ENCODE measurements at regions of chr21 and their contacts with region 1.

Region 1: GRCh38 chr21:34986561-34987500 is 62.3 kb downstream of the RUNX1 start:
- DNase-seq: no peak
- ATAC-seq: peak; percentile 5; the same call in 1 of the 3 replicates
- H3K4me3 ChIP-seq: no peak overlapping the region
- H3K27ac ChIP-seq: no peak overlapping the region
- H3K4me1 ChIP-seq: peaks cover 19 to 56% of the 10 kb centered on the region in 2 experiments
- H3K27me3 ChIP-seq: no peaks in the 10 kb centered on the region
- CTCF ChIP-seq: no peak
- EP300 ChIP-seq: no peak
- POLR2A ChIP-seq: no peak
- RAD21 ChIP-seq: no peak

Region 2: GRCh38 chr21:34974162-34974981 is 12.5 kb before region 1 on chr21:
- CTCF ChIA-PET with region 1: no interaction called
- POLR2A ChIA-PET with region 1: interaction called, 12 read pairs
- in situ Hi-C with region 1: no loop called
- intact Hi-C with region 1: no loop called
- DNase-seq: no peak
- ATAC-seq: peak; percentile 61
- H3K4me3 ChIP-seq: no peak overlapping the region
- H3K27ac ChIP-seq: no peak overlapping the region
- H3K4me1 ChIP-seq: peaks cover 2 to 24% of the 10 kb centered on the region in 2 experiments; a peak in 4 of 5 replicates
- H3K27me3 ChIP-seq: no peaks in the 10 kb centered on the region
- CTCF ChIP-seq: no peak
- EP300 ChIP-seq: no peak
- POLR2A ChIP-seq: no peak
- RAD21 ChIP-seq: no peak

Region 3: DNA sequence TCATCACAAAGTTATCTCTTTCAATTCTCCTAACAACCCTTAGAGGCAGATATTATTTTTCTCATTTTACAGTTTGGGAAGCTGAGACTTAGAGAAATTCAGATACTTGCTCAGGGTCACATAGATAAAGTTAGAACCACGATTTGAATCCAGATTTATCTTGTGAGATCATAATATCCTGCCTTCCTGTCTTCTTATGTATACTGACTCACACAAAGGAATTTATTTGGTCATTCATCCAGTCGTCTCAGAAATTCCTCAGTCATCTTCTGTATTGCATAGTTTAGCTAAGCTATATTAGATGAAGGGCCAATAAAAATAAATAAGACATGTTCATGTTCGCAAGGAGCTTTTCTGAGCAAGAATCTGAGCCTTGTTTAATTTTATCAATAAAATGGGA is 98.0 kb after region 1 on chr21:
- CTCF ChIA-PET with region 1: no interaction called
- POLR2A ChIA-PET with region 1: no interaction called
- in situ Hi-C with region 1: no loop called
- intact Hi-C with region 1: no loop called
- DNase-seq: no peak
- ATAC-seq: no peak
- H3K4me3 ChIP-seq: no peak overlapping the region
- H3K27ac ChIP-seq: no peak overlapping the region
- H3K4me1 ChIP-seq: peaks cover 0 to 4% of the 10 kb centered on the region in 2 experiments; a peak in 1 of 5 replicates
- H3K27me3 ChIP-seq: no peaks in the 10 kb centered on the region
- CTCF ChIP-seq: no peak
- EP300 ChIP-seq: no peak
- POLR2A ChIP-seq: no peak
- RAD21 ChIP-seq: no peak

Region 4: DNA sequence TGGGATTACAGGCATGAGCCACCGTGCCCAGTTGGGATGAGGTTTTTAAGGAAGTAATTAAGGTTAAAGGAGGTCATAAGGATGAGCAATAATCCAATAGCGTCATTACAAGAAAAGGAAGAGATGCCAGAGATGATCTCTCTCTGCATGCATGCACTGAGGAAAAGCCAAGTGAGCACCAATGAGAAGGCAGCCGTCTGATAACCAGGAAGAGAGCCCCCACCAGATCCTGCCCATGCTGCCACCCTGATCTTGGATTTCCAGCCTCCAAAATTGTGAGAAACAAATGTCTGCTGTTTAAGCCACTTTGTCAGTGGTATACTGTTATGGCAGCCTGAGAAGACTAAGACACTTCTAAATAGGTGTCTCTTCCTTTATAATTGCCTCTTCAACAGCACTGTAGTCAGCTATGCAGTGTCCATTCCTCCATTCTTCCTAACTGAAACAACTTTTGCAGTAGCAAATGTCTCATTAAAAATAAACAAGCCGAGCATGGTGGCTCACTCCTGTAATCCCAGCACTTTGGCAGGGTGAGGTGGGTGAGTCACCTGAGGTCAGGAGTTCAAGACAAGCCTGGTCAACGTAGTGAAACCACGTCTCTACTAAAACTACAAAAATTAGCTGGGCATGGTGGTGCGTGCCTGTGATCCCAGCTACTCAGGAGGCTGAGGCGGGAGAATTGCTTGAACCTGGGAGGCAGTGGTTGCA is 278.5 kb after region 1 on chr21:
- CTCF ChIA-PET with region 1: no interaction called
- POLR2A ChIA-PET with region 1: no interaction called
- in situ Hi-C with region 1: no loop called
- intact Hi-C with region 1: no loop called
- DNase-seq: peak in 1 of 4 experiments; percentile 28
- ATAC-seq: no peak
- H3K4me3 ChIP-seq: no peak overlapping the region
- H3K27ac ChIP-seq: no peak overlapping the region
- H3K4me1 ChIP-seq: peaks cover 0 to 2% of the 10 kb centered on the region in 2 experiments; a peak in 1 of 5 replicates
- H3K27me3 ChIP-seq: no peaks in the 10 kb centered on the region
- CTCF ChIP-seq: no peak
- EP300 ChIP-seq: no peak
- POLR2A ChIP-seq: no peak
- RAD21 ChIP-seq: no peak

Region 5: DNA sequence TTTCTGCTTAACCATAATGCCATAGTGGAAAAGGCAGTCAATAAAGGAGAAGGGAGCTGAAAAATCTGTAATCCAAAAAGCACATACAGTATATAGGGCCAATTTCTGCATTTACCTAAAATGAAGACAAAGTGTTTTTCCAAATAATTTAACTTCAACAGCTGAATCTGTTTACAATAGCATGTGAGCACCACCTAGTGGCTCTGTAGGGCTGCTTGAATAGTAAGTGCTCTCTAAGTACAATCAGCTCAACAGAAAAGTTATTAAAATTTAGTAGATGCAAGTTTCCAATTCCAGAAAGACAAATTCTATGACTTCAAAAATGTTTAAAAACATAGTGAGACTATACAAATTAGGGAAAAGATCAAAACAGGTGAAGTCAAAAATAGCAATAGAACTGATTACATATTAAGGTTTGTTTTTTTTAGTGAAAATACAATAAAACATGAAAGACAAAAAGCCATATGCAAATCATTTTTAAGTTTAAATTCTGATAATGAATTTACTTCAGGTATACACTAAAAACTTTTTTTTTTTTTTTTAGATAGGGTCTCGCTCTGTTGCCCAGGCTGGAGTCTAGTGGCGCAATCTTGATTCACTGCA is 853.5 kb after region 1 on chr21:
- CTCF ChIA-PET with region 1: no interaction called
- POLR2A ChIA-PET with region 1: no interaction called
- in situ Hi-C with region 1: loop called (anchors 10 kb)
- intact Hi-C with region 1: no loop called
- DNase-seq: peak; percentile 43 to 78 (median 54)
- ATAC-seq: peak; percentile 82
- H3K4me3 ChIP-seq: no peak overlapping the region
- H3K27ac ChIP-seq: no peak overlapping the region
- H3K4me1 ChIP-seq: no peaks in the 10 kb centered on the region
- H3K27me3 ChIP-seq: peaks cover 0 to 11% of the 10 kb centered on the region in 2 experiments; a peak in 3 of 5 replicates
- CTCF ChIP-seq: peak; percentile 70 to 87 (median 75); a peak in 5 of 6 replicates
- EP300 ChIP-seq: no peak
- POLR2A ChIP-seq: no peak
- RAD21 ChIP-seq: peak; percentile 82 to 96